Activated CD4-positive, alpha-beta T cell treated with anti-CD3 and anti-CD28 coated beads, Interleukin-2, amount 10 ng/mL, durations not matched to agents 24 days and 14 days (primary cell): ENCODE measurements at regions of chr1 and their contacts with region 1.

Region 1: GRCh38 chr1:84143796-84144565 is at the start of gene PRKACB:
- DNase-seq: peak; percentile 82
- H3K4me3 Mint-ChIP-seq: peak within 1 kb of the TSS; percentile 85
- H3K27ac Mint-ChIP-seq: peak within 1 kb of the TSS; percentile 98
- H3K4me1 Mint-ChIP-seq: peaks cover 23% of the 10 kb centered on the region
- H3K27me3 Mint-ChIP-seq: no peaks in the 10 kb centered on the region
- total RNA-seq, gene PRKACB: 19.1 and 19.3 TPM in 2 replicates

Region 2: GRCh38 chr1:84117868-84118267 is 26.1 kb before region 1 on chr1:
- intact Hi-C with region 1: no loop called
- DNase-seq: no peak
- H3K4me3 Mint-ChIP-seq: no peak overlapping the region
- H3K27ac Mint-ChIP-seq: no peak overlapping the region
- H3K4me1 Mint-ChIP-seq: peaks cover 9% of the 10 kb centered on the region
- H3K27me3 Mint-ChIP-seq: peaks cover 4% of the 10 kb centered on the region

Region 3: GRCh38 chr1:84298328-84298683 is 154.3 kb after region 1 on chr1:
- intact Hi-C with region 1: loop called (anchors 2 kb)
- DNase-seq: peak; percentile 88
- H3K4me3 Mint-ChIP-seq: peak overlapping the region; percentile 91
- H3K27ac Mint-ChIP-seq: peak overlapping the region; percentile 85
- H3K4me1 Mint-ChIP-seq: peaks cover 33% of the 10 kb centered on the region
- H3K27me3 Mint-ChIP-seq: peaks cover 13% of the 10 kb centered on the region

Region 4: DNA sequence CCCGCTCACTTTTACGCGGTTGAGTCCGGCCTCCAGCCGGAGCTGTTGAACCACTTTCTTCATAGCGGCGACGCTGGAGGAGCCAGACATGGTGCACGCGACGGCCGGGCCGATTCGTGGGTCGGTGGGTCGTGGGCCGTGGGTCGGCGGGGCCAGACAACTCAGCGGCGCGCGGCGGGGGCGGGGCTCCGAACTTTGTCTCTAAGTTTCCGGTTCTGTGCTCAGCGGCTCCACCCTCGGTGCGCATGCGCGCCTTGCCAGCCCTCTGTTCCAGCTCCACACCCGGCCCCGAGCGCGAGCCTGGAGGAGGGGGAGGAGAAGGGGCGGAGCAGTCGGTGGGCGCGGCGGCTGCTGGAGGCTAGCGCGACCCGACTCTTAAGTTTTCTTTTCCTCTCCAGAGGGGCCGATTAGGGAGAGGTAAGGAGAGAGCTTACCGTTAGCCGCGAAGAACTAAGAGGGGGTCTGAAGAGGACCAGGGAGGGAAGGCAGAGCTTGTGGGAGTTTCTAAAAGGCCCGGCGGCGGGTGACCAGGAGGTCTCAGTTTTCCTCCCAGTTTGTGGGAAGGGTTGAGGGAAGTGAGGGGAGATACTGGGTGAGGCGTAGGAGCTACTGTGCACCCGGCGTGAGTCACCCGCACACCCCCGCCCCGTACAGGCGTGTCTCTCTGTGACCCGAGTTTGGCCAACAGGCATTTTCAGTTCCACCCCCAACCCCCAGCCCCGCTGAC is 362.2 kb after region 1 on chr1 and contains the starts of genes GNG5 and SPATA1:
- intact Hi-C with region 1: loop called (anchors 2 kb)
- DNase-seq: peak; percentile 99
- H3K4me3 Mint-ChIP-seq: peak within 1 kb of the TSS; percentile 99
- H3K27ac Mint-ChIP-seq: peak within 1 kb of the TSS; percentile 99
- H3K4me1 Mint-ChIP-seq: peaks cover 41% of the 10 kb centered on the region
- H3K27me3 Mint-ChIP-seq: no peaks in the 10 kb centered on the region
- total RNA-seq, gene GNG5: 115 and 122 TPM in 2 replicates
- total RNA-seq, gene SPATA1: 0.69 and 0.98 TPM in 2 replicates

Region 5: GRCh38 chr1:84620720-84621313 is 476.8 kb after region 1 on chr1:
- intact Hi-C with region 1: loop called (anchors 1 kb)
- DNase-seq: peak; percentile 96
- H3K4me3 Mint-ChIP-seq: peak overlapping the region; percentile 91
- H3K27ac Mint-ChIP-seq: peak overlapping the region; percentile 92
- H3K4me1 Mint-ChIP-seq: peaks cover 18% of the 10 kb centered on the region
- H3K27me3 Mint-ChIP-seq: peaks cover 2% of the 10 kb centered on the region

Region 6: DNA sequence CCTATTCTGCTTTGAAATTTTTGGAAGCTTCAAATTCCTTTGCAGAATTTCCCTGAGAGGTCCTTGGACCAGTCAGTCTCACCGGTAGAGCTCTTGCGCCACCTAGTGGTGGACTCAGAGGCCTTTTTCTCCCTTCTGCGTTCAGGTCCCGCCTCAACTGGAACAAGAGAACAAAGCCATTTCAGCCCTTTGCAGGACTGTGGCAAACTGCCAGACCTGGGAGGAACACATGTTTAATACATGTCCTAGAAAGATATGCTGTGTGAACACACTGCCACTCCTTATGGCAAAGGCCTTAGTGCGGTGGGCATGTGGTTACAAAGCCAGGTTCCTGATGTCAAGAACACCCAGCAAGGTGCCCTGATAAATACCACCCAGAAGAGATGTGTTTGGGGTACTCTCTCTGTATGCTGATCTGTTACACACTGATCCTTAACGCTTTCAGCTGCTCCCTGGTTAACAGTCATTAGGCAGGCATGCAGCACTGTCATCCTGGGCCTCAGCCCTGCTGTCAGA is 628.5 kb after region 1 on chr1:
- intact Hi-C with region 1: loop called (anchors 1 kb)
- DNase-seq: peak; percentile 88
- H3K4me3 Mint-ChIP-seq: no peak overlapping the region
- H3K27ac Mint-ChIP-seq: no peak overlapping the region
- H3K4me1 Mint-ChIP-seq: peaks cover 3% of the 10 kb centered on the region
- H3K27me3 Mint-ChIP-seq: peaks cover 25% of the 10 kb centered on the region

Region 7: GRCh38 chr1:84996846-84997666 is 853.1 kb after region 1 on chr1 and contains the start of gene MCOLN2:
- intact Hi-C with region 1: loop called (anchors 5 kb)
- DNase-seq: peak; percentile 88
- H3K4me3 Mint-ChIP-seq: peak within 1 kb of the TSS; percentile 85
- H3K27ac Mint-ChIP-seq: peak within 1 kb of the TSS; percentile 89
- H3K4me1 Mint-ChIP-seq: peaks cover 47% of the 10 kb centered on the region
- H3K27me3 Mint-ChIP-seq: peaks cover 36% of the 10 kb centered on the region
- total RNA-seq, gene MCOLN2: 92.3 and 95.6 TPM in 2 replicates